ENCODE measurements at regions of chr12 and their contacts with region 1.

Region 1: DNA sequence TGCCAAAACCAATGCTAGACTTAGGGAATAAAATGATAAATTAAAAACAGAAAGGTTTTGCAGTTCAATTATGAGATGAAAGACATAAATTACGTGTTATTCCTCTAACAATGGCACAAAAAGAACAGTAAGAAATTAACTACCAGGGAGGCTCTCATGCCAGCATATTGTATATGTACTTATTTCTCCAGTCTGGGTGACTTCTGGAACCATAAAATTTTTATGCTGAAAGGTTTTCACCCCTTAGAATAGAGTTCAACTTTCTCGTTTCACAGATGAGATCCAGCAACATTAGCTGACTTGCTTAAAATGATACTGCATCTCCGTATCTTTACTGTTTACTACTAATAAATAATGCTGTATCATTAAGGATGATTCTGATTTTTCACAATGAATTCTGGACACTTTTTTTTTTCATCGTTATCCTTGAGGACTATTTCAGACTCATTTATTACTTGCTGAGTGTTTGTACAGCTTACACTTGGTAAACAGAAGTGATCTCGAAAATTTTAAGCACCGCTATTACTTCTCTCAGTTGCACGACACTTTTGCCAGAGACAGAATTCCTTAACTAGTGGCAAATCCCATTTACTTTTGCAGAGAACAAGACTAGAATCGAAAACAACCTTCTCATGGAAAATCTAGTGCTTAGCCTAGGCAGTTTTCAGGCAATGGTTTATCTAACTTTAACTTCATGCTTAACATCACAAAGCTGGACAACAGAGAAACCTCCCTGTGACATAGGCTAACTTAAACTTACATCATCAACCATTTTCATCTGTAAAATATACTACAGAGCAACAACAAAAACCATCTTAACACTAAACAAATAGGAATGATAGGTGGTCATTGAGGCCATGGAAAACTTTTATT is 2.7 kb downstream of the RSRC2 start:
- DNase-seq: no peak
- H3K4me3 ChIP-seq: peak overlapping the region; percentile 84
- H3K27ac ChIP-seq: no peak overlapping the region
- H3K4me1 ChIP-seq: peaks cover 9% of the 10 kb centered on the region
- H3K27me3 ChIP-seq: no peaks in the 10 kb centered on the region
- CTCF ChIP-seq: no peak
- EP300 ChIP-seq: no peak
- POLR2A ChIP-seq: no peak

Region 2: DNA sequence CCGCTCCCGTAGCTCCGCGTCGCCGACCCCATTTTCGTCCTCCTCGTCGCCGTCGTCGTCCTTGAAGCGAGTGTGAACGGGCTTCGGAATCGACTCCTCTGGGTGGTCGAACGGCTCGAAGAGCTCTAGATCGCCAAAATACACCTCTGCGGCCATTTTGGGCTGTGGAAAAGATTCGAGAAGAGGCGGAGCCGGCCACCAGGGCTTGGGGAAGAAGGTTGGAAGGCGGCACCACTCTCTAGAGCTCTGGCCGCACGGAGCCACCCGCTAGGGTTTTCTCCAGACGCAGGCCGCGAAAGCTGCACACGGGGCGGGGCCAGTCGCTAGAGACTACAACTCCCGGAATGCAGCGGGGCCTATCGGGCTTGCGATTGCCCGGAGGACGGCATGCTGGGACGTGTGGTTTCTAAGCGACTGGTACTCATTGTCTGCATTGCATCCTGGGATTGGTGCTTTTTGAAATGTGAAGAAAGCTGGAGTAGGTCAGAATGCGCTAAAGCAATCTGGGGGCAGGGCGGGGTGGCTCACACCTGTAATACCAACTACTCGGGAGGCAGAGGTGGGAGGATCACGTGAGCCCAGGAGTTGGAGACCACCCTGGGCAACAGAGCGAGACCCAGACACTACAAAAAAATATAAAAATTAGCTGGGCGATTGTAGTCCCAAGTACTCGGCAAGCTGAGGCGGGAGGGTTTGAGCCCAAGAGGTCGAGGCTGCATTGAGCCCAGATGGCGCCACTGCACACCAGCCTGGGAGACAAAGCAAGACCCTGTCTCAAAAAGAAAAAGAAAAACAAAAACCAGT is 23.2 kb before region 1 on chr12 and contains the start of gene ZCCHC8:
- intact Hi-C with region 1: loop called in 1 of 4 experiments (anchors 2 kb)
- DNase-seq: peak; percentile 94 to 97 (median 95)
- H3K4me3 ChIP-seq: peak within 1 kb of the TSS; percentile 94
- H3K27ac ChIP-seq: peak within 1 kb of the TSS; percentile 91 to 96
- H3K4me1 ChIP-seq: peaks cover 4% of the 10 kb centered on the region
- H3K27me3 ChIP-seq: no peaks in the 10 kb centered on the region
- CTCF ChIP-seq: peak in 2 of 3 donors; percentile 37 to 50
- EP300 ChIP-seq: no peak
- POLR2A ChIP-seq: peak; percentile 93
- total RNA-seq, gene ZCCHC8: 18.0 to 31.8 (median 22.7) TPM

Measured in ovary (tissue), 10 donors.